Left cardiac atrium (tissue), 4 donors: ENCODE measurements at regions of chr1 and their contacts with region 1.

Region 1: GRCh38 chr1:169133801-169134502 is 27.5 kb downstream of the ATP1B1 start:
- DNase-seq: no peak
- ATAC-seq: peak in 1 of 2 donors; percentile 66

Region 2: GRCh38 chr1:168603501-168604110 is 530.3 kb before region 1 on chr1:
- intact Hi-C with region 1: loop called in 1 of 2 experiments (anchors 10 kb)
- DNase-seq: peak; percentile 81
- ATAC-seq: peak; percentile 93 to 94